PC-9 (cell line): ENCODE measurements at regions of chr2 and their contacts with region 1.

Region 1: GRCh38 chr2:226850024-226850423 is 14.2 kb downstream of the RHBDD1 start:
- DNase-seq: no peak
- H3K4me3 ChIP-seq: no peak overlapping the region
- H3K27ac ChIP-seq: no peak overlapping the region
- H3K4me1 ChIP-seq: no peaks in the 10 kb centered on the region
- H3K27me3 ChIP-seq: no peaks in the 10 kb centered on the region
- CTCF ChIP-seq: no peak

Region 2: GRCh38 chr2:225556461-225556860 is 1293.6 kb before region 1 on chr2:
- CTCF ChIA-PET with region 1: no interaction called
- POLR2A ChIA-PET with region 1: interaction called, 23 read pairs
- intact Hi-C with region 1: no loop called
- DNase-seq: no peak
- H3K4me3 ChIP-seq: no peak overlapping the region
- H3K27ac ChIP-seq: no peak overlapping the region
- H3K4me1 ChIP-seq: no peaks in the 10 kb centered on the region
- H3K27me3 ChIP-seq: no peaks in the 10 kb centered on the region
- CTCF ChIP-seq: 0 out of 2 replicates have a peak, but pooled peaks have one; percentile 14